ENCODE measurements at regions of chr2 and their contacts with region 1.

Region 1: DNA sequence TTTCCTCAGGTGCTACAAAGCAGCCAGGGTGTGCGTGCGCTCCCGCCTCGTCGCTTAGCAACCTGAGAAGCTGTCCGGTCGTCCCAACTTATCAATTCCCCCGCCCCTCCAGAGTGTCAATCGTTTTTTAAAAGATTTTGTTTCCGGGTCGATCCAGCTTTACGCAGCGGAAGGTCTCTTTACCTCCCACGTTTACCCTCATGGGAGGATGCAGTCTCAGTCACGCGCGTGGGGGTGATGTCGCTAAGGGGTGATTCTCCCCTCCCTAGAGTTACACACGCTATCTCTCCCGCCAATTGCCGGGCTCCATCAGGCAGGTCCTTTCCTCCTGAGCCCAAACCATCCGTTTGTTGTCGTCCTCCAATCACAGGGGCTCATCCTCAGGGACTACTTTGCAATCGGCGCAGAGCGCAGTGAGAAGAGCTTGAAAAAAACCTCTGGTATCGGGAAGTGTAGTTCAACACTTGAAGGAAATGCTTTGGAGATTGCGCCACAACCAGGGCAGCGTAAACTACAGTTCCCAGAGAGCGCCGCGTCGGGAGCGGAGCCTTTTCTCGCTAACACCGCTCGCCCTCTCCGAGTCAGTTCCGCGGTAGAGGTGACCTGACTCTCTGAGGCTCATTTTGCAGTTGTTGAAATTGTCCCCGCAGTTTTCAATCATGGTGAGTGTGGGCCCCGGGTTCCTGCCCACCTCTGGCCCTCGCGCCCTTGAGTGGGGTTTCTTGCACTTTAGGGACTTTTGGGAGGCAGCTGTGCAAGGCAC is at the starts of genes MDH1 and WDPCP:
- DNase-seq: peak; percentile 95
- H3K4me3 Mint-ChIP-seq: peak within 1 kb of the TSS; percentile 99
- H3K27ac Mint-ChIP-seq: peak within 1 kb of the TSS; percentile 94
- H3K4me1 Mint-ChIP-seq: peaks cover 31% of the 10 kb centered on the region
- H3K27me3 Mint-ChIP-seq: no peaks in the 10 kb centered on the region
- total RNA-seq, gene MDH1: 269 to 275 TPM
- total RNA-seq, gene WDPCP: 5.6 to 5.7 TPM

Region 2: GRCh38 chr2:62202019-62202722 is 1386.4 kb before region 1 on chr2:
- CTCF ChIA-PET with region 1: no interaction called
- intact Hi-C with region 1: loop called (anchors 5 kb)
- DNase-seq: peak; percentile 35
- H3K4me3 Mint-ChIP-seq: peak overlapping the region; percentile 17
- H3K27ac Mint-ChIP-seq: peak overlapping the region; percentile 97
- H3K4me1 Mint-ChIP-seq: peaks cover 79% of the 10 kb centered on the region
- H3K27me3 Mint-ChIP-seq: no peaks in the 10 kb centered on the region

Region 3: GRCh38 chr2:63056107-63057050 is 532.2 kb before region 1 on chr2:
- CTCF ChIA-PET with region 1: no interaction called
- intact Hi-C with region 1: loop called (anchors 2 kb)
- DNase-seq: peak; percentile 37
- H3K4me3 Mint-ChIP-seq: peak overlapping the region; percentile 30
- H3K27ac Mint-ChIP-seq: no peak overlapping the region
- H3K4me1 Mint-ChIP-seq: peaks cover 66% of the 10 kb centered on the region
- H3K27me3 Mint-ChIP-seq: peaks cover 79% of the 10 kb centered on the region

Region 4: GRCh38 chr2:63124208-63124607 is 464.4 kb before region 1 on chr2:
- CTCF ChIA-PET with region 1: no interaction called
- intact Hi-C with region 1: no loop called
- DNase-seq: no peak
- H3K4me3 Mint-ChIP-seq: no peak overlapping the region
- H3K27ac Mint-ChIP-seq: no peak overlapping the region
- H3K4me1 Mint-ChIP-seq: no peaks in the 10 kb centered on the region
- H3K27me3 Mint-ChIP-seq: no peaks in the 10 kb centered on the region

Region 5: DNA sequence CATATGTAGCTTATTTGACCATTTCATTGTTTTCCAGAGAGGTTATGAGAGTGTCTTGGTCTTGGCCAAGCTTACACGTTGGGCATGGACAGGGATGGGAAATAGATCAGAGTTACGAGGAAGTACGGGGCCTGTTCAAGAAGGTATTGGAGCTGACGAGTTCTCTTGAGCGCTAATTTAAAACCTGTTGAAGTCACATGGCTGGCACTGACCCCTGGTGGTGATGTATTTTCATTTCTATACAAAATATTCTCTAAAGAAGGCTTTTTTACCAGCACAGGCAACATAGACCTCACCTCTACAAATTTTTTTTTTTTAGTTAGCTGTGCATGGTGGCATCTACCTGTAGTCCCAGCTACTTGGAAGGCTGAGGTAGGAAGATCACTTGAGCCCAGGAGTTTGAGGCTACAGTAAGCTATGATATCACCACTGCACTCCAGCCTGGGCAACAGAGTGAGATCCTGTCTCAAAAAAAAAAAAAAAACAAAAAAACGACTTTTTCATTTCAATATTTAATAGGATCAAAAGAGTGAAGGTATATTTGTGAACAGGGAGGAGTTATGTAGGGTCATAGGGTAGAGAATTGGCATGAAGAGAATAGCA is 272.8 kb after region 1 on chr2:
- CTCF ChIA-PET with region 1: interaction called, 7 read pairs
- intact Hi-C with region 1: loop called (anchors 1 kb)
- DNase-seq: peak; percentile 73
- H3K4me3 Mint-ChIP-seq: no peak overlapping the region
- H3K27ac Mint-ChIP-seq: no peak overlapping the region
- H3K4me1 Mint-ChIP-seq: peaks cover 44% of the 10 kb centered on the region
- H3K27me3 Mint-ChIP-seq: no peaks in the 10 kb centered on the region

Region 6: DNA sequence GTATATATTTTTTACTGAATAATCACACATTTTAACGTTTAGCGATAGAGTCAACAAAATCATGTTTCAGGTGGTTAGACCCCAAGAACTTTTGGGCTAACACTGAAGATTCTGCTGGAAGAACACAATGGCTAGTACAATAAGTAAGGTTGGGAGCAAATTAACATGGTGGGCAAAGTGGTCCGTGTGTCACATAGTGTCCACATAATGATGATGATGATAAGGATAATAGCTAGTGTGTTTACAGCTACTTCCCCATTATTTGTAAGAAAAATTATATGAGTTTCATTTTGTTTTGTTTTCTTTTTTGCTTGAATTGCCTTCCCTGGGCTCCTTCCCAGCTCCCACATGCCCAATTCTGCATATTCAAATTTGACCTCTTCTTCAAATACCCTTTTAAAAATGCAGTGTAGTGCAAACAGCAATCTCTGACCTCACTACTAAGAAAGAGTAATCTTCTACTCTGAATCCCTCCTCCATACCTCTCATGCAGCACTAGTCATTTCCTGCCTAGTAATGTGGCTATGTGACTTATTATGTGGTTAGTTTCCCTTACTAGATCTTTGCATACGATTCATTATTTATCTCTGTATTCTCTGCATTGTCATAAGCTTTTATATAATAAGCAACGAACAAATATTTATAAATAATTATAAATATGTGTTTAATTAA is 447.6 kb after region 1 on chr2:
- CTCF ChIA-PET with region 1: no interaction called
- intact Hi-C with region 1: loop called (anchors 1 kb)
- DNase-seq: peak; percentile 37
- H3K4me3 Mint-ChIP-seq: peak overlapping the region; percentile 25
- H3K27ac Mint-ChIP-seq: peak overlapping the region; percentile 70
- H3K4me1 Mint-ChIP-seq: peaks cover 50% of the 10 kb centered on the region
- H3K27me3 Mint-ChIP-seq: no peaks in the 10 kb centered on the region

Region 7: GRCh38 chr2:65129826-65130663 is 1541.5 kb after region 1 on chr2 and contains the start of gene RAB1A:
- CTCF ChIA-PET with region 1: no interaction called
- intact Hi-C with region 1: loop called (anchors 1 kb)
- DNase-seq: peak; percentile 100
- H3K4me3 Mint-ChIP-seq: peak within 1 kb of the TSS; percentile 95
- H3K27ac Mint-ChIP-seq: peak within 1 kb of the TSS; percentile 94
- H3K4me1 Mint-ChIP-seq: peaks cover 35% of the 10 kb centered on the region
- H3K27me3 Mint-ChIP-seq: no peaks in the 10 kb centered on the region
- total RNA-seq, gene RAB1A: 60.8 to 61.3 TPM